CD4-positive, alpha-beta memory T cell (primary cell): ENCODE measurements at regions of chr17 and their contacts with region 1.

Region 1: GRCh38 chr17:48878918-48879898 is 13.4 kb upstream of the ATP5MC1 start:
- DNase-seq: peak; percentile 67 to 71 (median 70)
- H3K4me3 ChIP-seq: no peak overlapping the region
- H3K4me3 Mint-ChIP-seq: no peak overlapping the region
- H3K27ac ChIP-seq: no peak overlapping the region
- H3K27ac Mint-ChIP-seq: no peak overlapping the region
- H3K4me1 ChIP-seq: no peaks in the 10 kb centered on the region
- H3K4me1 Mint-ChIP-seq: peaks cover 0 to 7% (median 2%) of the 10 kb centered on the region in 4 donors
- H3K27me3 ChIP-seq: no peaks in the 10 kb centered on the region
- H3K27me3 Mint-ChIP-seq: peaks cover 0 to 7% of the 10 kb centered on the region in 2 donors

Region 2: GRCh38 chr17:48678141-48678971 is 200.9 kb before region 1 on chr17:
- CTCF ChIA-PET with region 1: interaction called, 159 read pairs
- POLR2A ChIA-PET with region 1: interaction called, 9 read pairs
- intact Hi-C with region 1: loop called (anchors 1 kb)
- DNase-seq: peak; percentile 56 to 68 (median 59)
- H3K4me3 ChIP-seq: no peak overlapping the region
- H3K4me3 Mint-ChIP-seq: peak overlapping the region in 4 of 8 donors; percentile 44 to 62 (median 52)
- H3K27ac ChIP-seq: no peak overlapping the region
- H3K27ac Mint-ChIP-seq: peak overlapping the region in 2 of 7 donors; percentile 47 to 68
- H3K4me1 ChIP-seq: peaks cover 8% of the 10 kb centered on the region
- H3K4me1 Mint-ChIP-seq: peaks cover 0 to 2% (median under 1%) of the 10 kb centered on the region in 4 donors
- H3K27me3 ChIP-seq: peaks cover 7% of the 10 kb centered on the region
- H3K27me3 Mint-ChIP-seq: peaks cover 28 to 40% of the 10 kb centered on the region in 2 donors

Region 3: GRCh38 chr17:48804925-48805411 is 74.2 kb before region 1 on chr17:
- CTCF ChIA-PET with region 1: interaction called, 463 read pairs
- POLR2A ChIA-PET with region 1: interaction called, 9 read pairs
- intact Hi-C with region 1: loop called (anchors 1 kb)
- DNase-seq: peak; percentile 49 to 64 (median 55)
- H3K4me3 ChIP-seq: no peak overlapping the region
- H3K4me3 Mint-ChIP-seq: no peak overlapping the region
- H3K27ac ChIP-seq: no peak overlapping the region
- H3K27ac Mint-ChIP-seq: no peak overlapping the region
- H3K4me1 ChIP-seq: no peaks in the 10 kb centered on the region
- H3K4me1 Mint-ChIP-seq: no peaks in the 10 kb centered on the region
- H3K27me3 ChIP-seq: no peaks in the 10 kb centered on the region
- H3K27me3 Mint-ChIP-seq: peaks cover 0 to 10% of the 10 kb centered on the region in 2 donors

Region 4: GRCh38 chr17:48836004-48836403 is 43.2 kb before region 1 on chr17:
- CTCF ChIA-PET with region 1: interaction called, 27 read pairs
- POLR2A ChIA-PET with region 1: interaction called, 3 read pairs
- intact Hi-C with region 1: no loop called
- DNase-seq: peak in 2 of 5 donors; percentile 5 to 13
- H3K4me3 ChIP-seq: no peak overlapping the region
- H3K4me3 Mint-ChIP-seq: peak overlapping the region in 6 of 8 donors; percentile 12 to 67 (median 56)
- H3K27ac ChIP-seq: no peak overlapping the region
- H3K27ac Mint-ChIP-seq: peak overlapping the region in 3 of 7 donors; percentile 5 to 72 (median 58)
- H3K4me1 ChIP-seq: peaks cover 96% of the 10 kb centered on the region
- H3K4me1 Mint-ChIP-seq: peaks cover 44 to 93% (median 73%) of the 10 kb centered on the region in 4 donors
- H3K27me3 ChIP-seq: no peaks in the 10 kb centered on the region
- H3K27me3 Mint-ChIP-seq: no peaks in the 10 kb centered on the region

Region 5: GRCh38 chr17:48868008-48868407 is 11.2 kb before region 1 on chr17:
- CTCF ChIA-PET with region 1: interaction called, 17 read pairs
- POLR2A ChIA-PET with region 1: interaction called, 5 read pairs
- intact Hi-C with region 1: no loop called
- DNase-seq: no peak
- H3K4me3 ChIP-seq: no peak overlapping the region
- H3K4me3 Mint-ChIP-seq: no peak overlapping the region
- H3K27ac ChIP-seq: no peak overlapping the region
- H3K27ac Mint-ChIP-seq: peak overlapping the region in 1 of 7 donors; percentile 35
- H3K4me1 ChIP-seq: no peaks in the 10 kb centered on the region
- H3K4me1 Mint-ChIP-seq: peaks cover 0 to 4% (median 2%) of the 10 kb centered on the region in 4 donors
- H3K27me3 ChIP-seq: no peaks in the 10 kb centered on the region
- H3K27me3 Mint-ChIP-seq: no peaks in the 10 kb centered on the region

Region 6: GRCh38 chr17:49031965-49032928 is 153.0 kb after region 1 on chr17:
- CTCF ChIA-PET with region 1: interaction called, 3 read pairs
- POLR2A ChIA-PET with region 1: no interaction called
- intact Hi-C with region 1: loop called (anchors 5 kb)
- DNase-seq: peak; percentile 41 to 56 (median 54)
- H3K4me3 ChIP-seq: no peak overlapping the region
- H3K4me3 Mint-ChIP-seq: no peak overlapping the region
- H3K27ac ChIP-seq: no peak overlapping the region
- H3K27ac Mint-ChIP-seq: no peak overlapping the region
- H3K4me1 ChIP-seq: peaks cover 3% of the 10 kb centered on the region
- H3K4me1 Mint-ChIP-seq: peaks cover 0 to 7% (median 2%) of the 10 kb centered on the region in 4 donors
- H3K27me3 ChIP-seq: no peaks in the 10 kb centered on the region
- H3K27me3 Mint-ChIP-seq: peaks cover 11 to 12% of the 10 kb centered on the region in 2 donors